ENCODE measurements at regions of chr6 and their contacts with region 1.

Region 1: DNA sequence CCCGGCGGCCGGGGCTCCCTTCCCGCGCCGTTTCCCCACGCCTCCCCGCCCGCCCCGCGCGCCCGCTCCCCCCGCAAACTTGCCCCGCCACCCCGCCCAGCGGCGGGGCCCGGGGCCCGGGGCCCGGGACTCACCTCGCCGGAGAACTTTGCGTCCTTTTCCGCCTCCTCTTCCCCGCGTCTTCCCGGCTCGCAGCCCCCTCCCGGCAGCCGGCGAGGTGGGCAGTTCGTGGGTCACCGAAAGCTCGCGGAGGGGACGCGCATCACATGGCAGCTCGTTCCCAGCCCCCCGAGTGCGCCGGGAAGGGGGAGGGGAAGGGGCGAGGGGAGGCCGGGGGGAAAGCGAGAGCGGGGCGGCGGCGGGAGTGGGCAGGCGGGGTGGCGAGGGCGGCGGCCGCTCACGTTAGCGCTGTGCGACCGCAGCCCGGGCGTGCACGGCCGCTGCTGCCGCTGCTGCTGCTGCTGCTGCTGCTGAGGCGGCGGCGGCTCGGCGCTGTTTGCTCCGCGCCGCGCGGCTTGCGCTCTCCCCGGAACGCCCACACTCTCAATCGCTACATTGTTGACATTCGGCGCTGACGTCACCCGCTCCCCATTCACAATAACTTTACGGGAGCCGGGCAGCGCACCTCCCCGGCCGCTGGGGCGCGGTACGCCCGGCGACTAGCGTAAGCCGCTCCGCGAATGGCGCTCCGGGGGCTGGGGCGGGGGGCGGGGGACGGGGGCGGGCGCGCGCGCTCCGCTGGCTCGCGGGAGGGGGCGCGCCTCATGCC is at the start of gene BACH2:
- DNase-seq: peak; percentile 92 to 96
- ATAC-seq: peak; percentile 76
- H3K4me3 ChIP-seq: peak within 1 kb of the TSS; percentile 22 to 86
- H3K27ac ChIP-seq: peak within 1 kb of the TSS; percentile 68 to 97
- H3K4me1 ChIP-seq: no peaks in the 10 kb centered on the region
- H3K27me3 ChIP-seq: no peaks in the 10 kb centered on the region
- total RNA-seq, gene BACH2: 11.6 to 22.2 TPM

Region 2: GRCh38 chr6:89940225-89941027 is 356.1 kb before region 1 on chr6:
- intact Hi-C with region 1: no loop called
- DNase-seq: peak in 1 of 2 donors; percentile 72
- ATAC-seq: peak; percentile 87
- H3K4me3 ChIP-seq: no peak overlapping the region
- H3K27ac ChIP-seq: no peak overlapping the region
- H3K4me1 ChIP-seq: peaks cover 0 to 3% of the 10 kb centered on the region in 2 donors
- H3K27me3 ChIP-seq: no peaks in the 10 kb centered on the region

Region 3: DNA sequence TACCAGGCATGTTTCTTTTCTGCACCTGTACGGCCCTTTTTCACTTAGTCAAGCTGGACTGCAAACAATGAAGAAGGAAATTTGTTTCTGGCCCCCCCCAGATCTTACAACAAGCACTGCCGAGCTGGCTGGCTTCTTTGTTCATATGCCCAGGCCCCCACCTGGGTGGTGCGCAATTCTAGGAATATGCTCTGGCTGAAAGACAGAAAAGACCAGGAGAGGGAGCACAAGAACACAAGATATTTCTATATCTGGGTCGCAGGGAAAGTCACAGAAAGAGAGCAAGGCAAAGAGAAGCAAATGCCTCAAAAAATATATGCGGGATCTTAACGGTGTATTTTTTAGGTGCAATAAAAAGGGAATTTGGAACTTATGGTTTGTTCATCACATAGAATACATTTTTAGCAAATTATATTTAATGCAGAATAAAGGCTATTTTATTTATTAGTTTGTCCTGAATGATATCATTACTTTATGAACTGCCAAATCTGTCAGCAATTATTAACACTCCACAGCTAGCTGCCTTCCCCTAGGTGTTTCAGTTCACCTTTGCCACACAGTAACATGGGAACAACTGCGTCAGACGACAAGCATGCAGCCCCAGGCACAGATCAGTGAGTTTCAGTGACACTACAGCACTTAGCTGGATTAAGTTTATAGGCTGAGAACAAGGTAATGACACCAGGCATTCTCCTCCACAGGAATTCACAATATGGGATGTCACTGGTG is 325.8 kb before region 1 on chr6:
- intact Hi-C with region 1: loop called (anchors 1 to 5 kb)
- DNase-seq: no peak
- ATAC-seq: peak; percentile 63
- H3K4me3 ChIP-seq: no peak overlapping the region
- H3K27ac ChIP-seq: no peak overlapping the region
- H3K4me1 ChIP-seq: no peaks in the 10 kb centered on the region
- H3K27me3 ChIP-seq: no peaks in the 10 kb centered on the region

Region 4: GRCh38 chr6:90274451-90275030 is 22.0 kb before region 1 on chr6:
- intact Hi-C with region 1: no loop called
- DNase-seq: peak in 1 of 2 donors; percentile 55
- ATAC-seq: no peak
- H3K4me3 ChIP-seq: no peak overlapping the region
- H3K27ac ChIP-seq: no peak overlapping the region
- H3K4me1 ChIP-seq: no peaks in the 10 kb centered on the region
- H3K27me3 ChIP-seq: no peaks in the 10 kb centered on the region

Region 5: GRCh38 chr6:90370493-90370959 is 74.0 kb after region 1 on chr6:
- intact Hi-C with region 1: loop called in 1 of 2 experiments (anchors 5 kb)
- DNase-seq: no peak
- ATAC-seq: no peak
- H3K4me3 ChIP-seq: no peak overlapping the region
- H3K27ac ChIP-seq: no peak overlapping the region
- H3K4me1 ChIP-seq: no peaks in the 10 kb centered on the region
- H3K27me3 ChIP-seq: no peaks in the 10 kb centered on the region

Region 6: GRCh38 chr6:90386399-90387382 is 90.2 kb after region 1 on chr6:
- intact Hi-C with region 1: loop called (anchors 5 kb)
- DNase-seq: no peak
- ATAC-seq: no peak
- H3K4me3 ChIP-seq: no peak overlapping the region
- H3K27ac ChIP-seq: no peak overlapping the region
- H3K4me1 ChIP-seq: peaks cover 0 to 4% of the 10 kb centered on the region in 2 donors
- H3K27me3 ChIP-seq: no peaks in the 10 kb centered on the region

Region 7: GRCh38 chr6:90393232-90393884 is 96.8 kb after region 1 on chr6:
- intact Hi-C with region 1: loop called (anchors 5 kb)
- DNase-seq: no peak
- ATAC-seq: peak; percentile 72
- H3K4me3 ChIP-seq: no peak overlapping the region
- H3K27ac ChIP-seq: no peak overlapping the region
- H3K4me1 ChIP-seq: peaks cover 0 to 2% of the 10 kb centered on the region in 2 donors
- H3K27me3 ChIP-seq: no peaks in the 10 kb centered on the region

Region 8: DNA sequence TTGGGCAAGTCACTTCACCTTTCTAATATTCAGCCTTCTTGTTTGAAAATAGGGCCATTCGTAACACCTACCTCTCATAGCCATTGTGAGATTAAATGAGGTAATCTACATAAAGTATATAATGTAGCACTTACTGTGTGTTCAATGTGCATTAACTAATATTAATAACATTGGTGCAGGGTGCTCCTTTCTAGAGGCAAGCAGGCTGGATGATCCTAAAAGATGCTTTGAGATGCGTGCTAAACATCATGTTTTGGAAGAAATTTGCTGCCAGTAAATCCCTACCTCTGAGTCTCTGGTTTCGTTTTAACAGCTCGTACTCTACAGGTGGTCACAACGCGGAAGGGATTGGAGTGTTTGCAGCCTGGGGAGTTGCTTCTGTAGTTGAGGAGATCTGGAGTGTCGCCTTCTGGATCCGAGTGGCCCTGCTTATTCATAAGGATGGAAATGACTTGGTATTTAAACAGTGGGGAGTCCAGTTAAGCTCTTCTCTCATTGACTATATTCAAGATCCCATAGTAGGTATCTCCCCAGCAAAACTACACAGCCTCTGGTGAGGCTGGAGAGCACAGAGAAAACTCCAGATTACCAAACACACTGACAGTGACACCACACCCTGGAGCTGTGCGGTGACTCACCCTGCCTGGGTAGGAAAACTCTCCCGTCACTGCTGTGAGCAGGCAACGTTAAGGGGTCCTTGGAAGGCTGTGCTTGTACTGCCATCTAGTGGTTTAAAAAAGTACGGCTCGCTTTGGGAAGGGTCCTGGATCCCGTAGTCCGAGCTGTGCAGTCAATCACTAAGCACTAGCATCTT is 182.5 kb after region 1 on chr6:
- intact Hi-C with region 1: loop called in 1 of 2 experiments (anchors 5 kb)
- DNase-seq: peak; percentile 91 to 93
- ATAC-seq: peak; percentile 97
- H3K4me3 ChIP-seq: no peak overlapping the region
- H3K27ac ChIP-seq: no peak overlapping the region
- H3K4me1 ChIP-seq: no peaks in the 10 kb centered on the region
- H3K27me3 ChIP-seq: no peaks in the 10 kb centered on the region

Measured in aorta (tissue), 5 donors.